ENCODE measurements at regions of chr2 and their contacts with region 1.

Region 1: DNA sequence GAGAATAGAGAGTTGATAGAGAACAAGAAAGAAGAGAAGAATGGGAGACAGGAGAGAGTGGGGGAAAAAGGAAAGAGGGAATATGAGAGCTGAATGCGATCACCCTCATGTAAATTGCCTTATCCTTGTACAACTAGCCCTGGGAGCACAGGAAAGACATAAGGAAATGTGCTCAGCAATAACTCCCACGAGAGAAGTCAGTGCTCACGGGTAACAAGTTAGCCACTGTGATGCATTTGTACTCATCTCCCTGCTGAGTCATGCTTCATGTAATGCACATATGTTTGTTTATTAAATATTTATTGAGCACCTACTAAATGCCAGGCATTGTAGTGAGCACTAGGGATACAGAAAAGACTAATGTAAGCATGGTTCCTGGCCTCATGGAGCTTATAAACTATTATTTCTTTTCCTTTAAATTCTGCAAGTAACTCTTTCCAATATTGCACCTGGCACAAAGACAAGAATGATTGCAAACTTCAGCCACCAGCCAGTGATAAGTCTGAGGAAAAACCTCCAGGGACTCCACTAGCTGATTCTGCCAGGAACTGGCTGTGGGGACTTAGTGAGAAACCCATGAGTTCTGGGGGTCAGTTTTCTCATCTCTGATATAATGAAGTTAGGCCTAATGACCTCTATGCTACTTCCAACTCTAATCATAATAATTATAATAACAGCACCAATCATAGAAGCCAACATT is 124.1 kb downstream of the LNPK start:
- DNase-seq: no peak
- ATAC-seq: peak in 3 of 8 donors; percentile 44 to 54 (median 46)
- H3K4me3 ChIP-seq: no peak overlapping the region
- H3K27ac ChIP-seq: no peak overlapping the region
- H3K4me1 ChIP-seq: peaks cover 0 to 9% (median 0%) of the 10 kb centered on the region in 9 donors
- H3K27me3 ChIP-seq: peaks cover 0 to 4% (median 0%) of the 10 kb centered on the region in 7 donors
- CTCF ChIP-seq: no peak

Region 2: GRCh38 chr2:175815537-175815936 is 62.5 kb before region 1 on chr2:
- intact Hi-C with region 1: no loop called
- DNase-seq: no peak
- ATAC-seq: no peak
- H3K4me3 ChIP-seq: no peak overlapping the region
- H3K27ac ChIP-seq: no peak overlapping the region
- H3K4me1 ChIP-seq: no peaks in the 10 kb centered on the region
- H3K27me3 ChIP-seq: no peaks in the 10 kb centered on the region
- CTCF ChIP-seq: no peak

Region 3: DNA sequence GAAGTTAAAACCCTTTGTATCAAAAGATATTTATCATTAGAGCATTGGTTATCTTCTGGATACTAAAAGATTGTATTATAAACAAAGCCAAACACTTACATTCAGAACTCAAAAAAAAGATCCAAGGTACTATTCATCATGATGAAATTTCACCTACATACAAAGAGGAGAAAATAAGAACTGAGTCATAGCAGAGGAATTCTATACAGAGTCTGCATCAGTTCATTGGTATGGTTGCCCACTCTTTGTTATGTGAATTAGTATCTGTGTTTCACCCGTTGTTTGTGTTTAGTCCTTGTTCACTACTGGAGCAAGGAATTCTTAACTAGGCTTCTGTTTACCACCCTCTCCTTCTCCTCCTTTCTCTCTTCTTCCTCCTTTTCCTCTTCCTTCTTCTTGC is 33.8 kb before region 1 on chr2:
- intact Hi-C with region 1: no loop called
- DNase-seq: no peak
- ATAC-seq: no peak
- H3K4me3 ChIP-seq: no peak overlapping the region
- H3K27ac ChIP-seq: no peak overlapping the region
- H3K4me1 ChIP-seq: peaks cover 0 to 7% (median 0%) of the 10 kb centered on the region in 9 donors
- H3K27me3 ChIP-seq: no peaks in the 10 kb centered on the region
- CTCF ChIP-seq: no peak

Region 4: DNA sequence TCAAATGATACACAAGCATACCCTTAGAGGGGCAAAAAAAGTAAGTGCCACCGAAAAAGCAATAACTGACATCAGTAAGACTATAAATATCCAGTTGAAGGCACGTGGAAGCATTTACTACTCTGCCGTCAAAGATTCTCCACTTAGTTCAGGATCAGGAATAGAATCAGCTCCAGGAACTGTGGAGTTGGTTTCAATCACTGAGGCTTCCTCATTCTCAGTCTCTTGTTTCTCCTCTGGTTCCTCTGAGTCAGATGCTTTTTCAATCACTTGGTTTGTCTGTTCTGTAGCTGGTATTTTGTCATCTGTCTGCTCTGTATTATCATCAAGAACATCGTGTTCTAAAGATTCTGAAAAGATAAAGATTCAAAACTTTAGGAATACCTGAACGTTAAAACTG is 51.9 kb after region 1 on chr2:
- intact Hi-C with region 1: no loop called
- DNase-seq: no peak
- ATAC-seq: peak in 6 of 8 donors; percentile 38 to 92 (median 58)
- H3K4me3 ChIP-seq: no peak overlapping the region
- H3K27ac ChIP-seq: peak overlapping the region in 4 of 10 donors; percentile 13 to 44 (median 26)
- H3K4me1 ChIP-seq: peaks cover 0 to 10% (median 0%) of the 10 kb centered on the region in 9 donors
- H3K27me3 ChIP-seq: no peaks in the 10 kb centered on the region
- CTCF ChIP-seq: no peak

Region 5: GRCh38 chr2:176039375-176039774 is 161.4 kb after region 1 on chr2:
- intact Hi-C with region 1: loop called in 1 of 10 experiments (anchors 10 kb)
- DNase-seq: no peak
- ATAC-seq: no peak
- H3K4me3 ChIP-seq: no peak overlapping the region
- H3K27ac ChIP-seq: no peak overlapping the region
- H3K4me1 ChIP-seq: peaks cover 0 to 8% (median 0%) of the 10 kb centered on the region in 9 donors
- H3K27me3 ChIP-seq: peaks cover 0 to 20% (median 4%) of the 10 kb centered on the region in 7 donors
- CTCF ChIP-seq: no peak